Activated CD8-positive, alpha-beta memory T cell treated with anti-CD3 and anti-CD28 coated beads, Interleukin-2, amount 10 ng/mL, durations not matched to agents 7 days and 5 days (primary cell): ENCODE measurements at regions of chr7 and their contacts with region 1.

Region 1: GRCh38 chr7:149742075-149742701 is 31.2 kb downstream of the ZNF467 start:
- DNase-seq: peak; percentile 74
- ATAC-seq: peak; percentile 79
- H3K4me3 Mint-ChIP-seq: peak overlapping the region; percentile 57
- H3K27ac Mint-ChIP-seq: no peak overlapping the region
- H3K4me1 Mint-ChIP-seq: peaks cover 10% of the 10 kb centered on the region
- H3K27me3 Mint-ChIP-seq: peaks cover 46% of the 10 kb centered on the region

Region 2: GRCh38 chr7:149414745-149415390 is 327.3 kb before region 1 on chr7:
- CTCF ChIA-PET with region 1: no interaction called
- DNase-seq: peak; percentile 49
- ATAC-seq: peak; percentile 58
- H3K4me3 Mint-ChIP-seq: peak overlapping the region; percentile 13
- H3K27ac Mint-ChIP-seq: no peak overlapping the region
- H3K4me1 Mint-ChIP-seq: peaks cover 7% of the 10 kb centered on the region
- H3K27me3 Mint-ChIP-seq: peaks cover 51% of the 10 kb centered on the region

Region 3: GRCh38 chr7:149559711-149560110 is 182.5 kb before region 1 on chr7:
- CTCF ChIA-PET with region 1: no interaction called
- DNase-seq: no peak
- ATAC-seq: no peak
- H3K4me3 Mint-ChIP-seq: no peak overlapping the region
- H3K27ac Mint-ChIP-seq: no peak overlapping the region
- H3K4me1 Mint-ChIP-seq: peaks cover 6% of the 10 kb centered on the region
- H3K27me3 Mint-ChIP-seq: no peaks in the 10 kb centered on the region

Region 4: GRCh38 chr7:149635561-149636329 is 106.4 kb before region 1 on chr7:
- CTCF ChIA-PET with region 1: no interaction called
- DNase-seq: peak; percentile 35
- ATAC-seq: no peak
- H3K4me3 Mint-ChIP-seq: no peak overlapping the region
- H3K27ac Mint-ChIP-seq: peak overlapping the region; percentile 29
- H3K4me1 Mint-ChIP-seq: no peaks in the 10 kb centered on the region
- H3K27me3 Mint-ChIP-seq: peaks cover 23% of the 10 kb centered on the region

Region 5: DNA sequence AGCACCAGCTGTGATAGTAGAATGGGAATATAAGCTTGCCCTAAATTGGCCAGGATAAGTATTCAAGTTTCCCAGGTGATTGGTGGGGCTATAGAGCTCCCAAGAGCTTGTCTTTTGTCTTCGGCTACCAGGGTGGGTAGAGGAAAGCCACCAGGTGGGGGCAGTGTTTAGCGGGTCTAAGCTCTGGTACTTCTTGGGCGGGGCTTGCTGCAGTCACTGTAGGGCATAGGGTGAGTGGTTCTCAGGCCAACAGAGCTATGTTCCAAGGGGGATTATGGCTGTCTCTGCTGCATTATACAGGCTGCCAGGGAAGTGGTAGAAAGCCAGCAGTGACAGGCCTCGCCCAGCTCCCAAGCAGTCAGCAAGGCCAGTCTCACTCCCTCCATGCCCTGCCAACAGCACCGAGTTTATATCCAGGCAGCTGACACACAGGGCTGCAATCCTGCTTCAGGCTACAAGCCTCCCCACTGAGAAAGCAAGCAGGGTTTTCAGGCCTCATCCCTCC is 79.5 kb before region 1 on chr7:
- CTCF ChIA-PET with region 1: interaction called, 49 read pairs
- DNase-seq: peak; percentile 75
- ATAC-seq: peak; percentile 86
- H3K4me3 Mint-ChIP-seq: no peak overlapping the region
- H3K27ac Mint-ChIP-seq: no peak overlapping the region
- H3K4me1 Mint-ChIP-seq: no peaks in the 10 kb centered on the region
- H3K27me3 Mint-ChIP-seq: peaks cover 72% of the 10 kb centered on the region

Region 6: GRCh38 chr7:149670288-149670687 is 71.9 kb before region 1 on chr7:
- CTCF ChIA-PET with region 1: interaction called, 49 read pairs
- DNase-seq: no peak
- ATAC-seq: no peak
- H3K4me3 Mint-ChIP-seq: no peak overlapping the region
- H3K27ac Mint-ChIP-seq: no peak overlapping the region
- H3K4me1 Mint-ChIP-seq: peaks cover 3% of the 10 kb centered on the region
- H3K27me3 Mint-ChIP-seq: peaks cover 61% of the 10 kb centered on the region

Region 7: GRCh38 chr7:149696280-149696679 is 45.9 kb before region 1 on chr7:
- CTCF ChIA-PET with region 1: no interaction called
- DNase-seq: no peak
- ATAC-seq: no peak
- H3K4me3 Mint-ChIP-seq: no peak overlapping the region
- H3K27ac Mint-ChIP-seq: no peak overlapping the region
- H3K4me1 Mint-ChIP-seq: no peaks in the 10 kb centered on the region
- H3K27me3 Mint-ChIP-seq: peaks cover 52% of the 10 kb centered on the region